ENCODE measurements at regions of chr15 and their contacts with region 1.

Region 1: GRCh38 chr15:74373731-74374647 is 6.5 kb upstream of the CYP11A1 start:
- DNase-seq: peak; percentile 96
- CTCF ChIP-seq: peak; percentile 96

Region 2: GRCh38 chr15:74389241-74390048 is 15.5 kb after region 1 on chr15:
- CTCF ChIA-PET with region 1: interaction called, 20 read pairs
- POLR2A ChIA-PET with region 1: no interaction called
- DNase-seq: no peak
- CTCF ChIP-seq: no peak

Region 3: DNA sequence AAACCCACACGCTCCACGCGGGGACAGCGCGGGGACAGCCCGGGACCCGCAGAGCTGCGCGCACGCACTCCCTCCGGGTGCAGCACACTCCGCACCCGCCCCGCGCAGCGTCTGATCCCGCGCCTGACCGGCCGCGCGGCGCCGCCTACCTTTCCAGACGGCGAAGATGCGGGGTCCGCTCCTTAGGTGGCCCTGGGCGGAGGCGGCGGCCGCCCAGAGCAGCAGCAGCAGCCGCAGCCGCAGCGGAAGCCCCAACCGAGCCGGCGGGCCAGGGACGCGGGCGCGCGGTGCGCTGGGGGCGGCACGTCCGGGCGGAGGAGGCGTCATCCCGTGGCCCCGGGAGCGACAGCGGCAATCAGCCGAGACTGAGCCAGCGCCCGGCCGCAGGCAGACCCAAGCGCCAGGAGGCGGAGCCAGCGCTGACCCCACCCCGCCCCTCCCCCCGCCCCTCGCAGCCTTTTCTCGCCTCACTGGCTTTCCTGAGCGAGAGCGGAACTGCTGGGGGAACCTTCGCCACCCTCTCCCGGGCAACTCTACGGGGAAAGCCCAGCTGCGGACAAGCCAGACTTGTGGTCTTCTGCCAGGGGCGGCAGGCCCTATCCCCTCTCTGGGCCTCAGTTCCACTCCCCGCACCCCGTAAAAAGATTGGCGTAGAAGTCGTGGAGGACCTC is 59.7 kb after region 1 on chr15 and contains the start of gene SEMA7A:
- CTCF ChIA-PET with region 1: interaction called, 827 read pairs
- POLR2A ChIA-PET with region 1: no interaction called
- DNase-seq: peak; percentile 97
- CTCF ChIP-seq: no peak

Region 4: GRCh38 chr15:74482661-74483060 is 108.7 kb after region 1 on chr15:
- CTCF ChIA-PET with region 1: interaction called, 77 read pairs
- POLR2A ChIA-PET with region 1: no interaction called
- DNase-seq: no peak
- CTCF ChIP-seq: peak; percentile 18

Region 5: DNA sequence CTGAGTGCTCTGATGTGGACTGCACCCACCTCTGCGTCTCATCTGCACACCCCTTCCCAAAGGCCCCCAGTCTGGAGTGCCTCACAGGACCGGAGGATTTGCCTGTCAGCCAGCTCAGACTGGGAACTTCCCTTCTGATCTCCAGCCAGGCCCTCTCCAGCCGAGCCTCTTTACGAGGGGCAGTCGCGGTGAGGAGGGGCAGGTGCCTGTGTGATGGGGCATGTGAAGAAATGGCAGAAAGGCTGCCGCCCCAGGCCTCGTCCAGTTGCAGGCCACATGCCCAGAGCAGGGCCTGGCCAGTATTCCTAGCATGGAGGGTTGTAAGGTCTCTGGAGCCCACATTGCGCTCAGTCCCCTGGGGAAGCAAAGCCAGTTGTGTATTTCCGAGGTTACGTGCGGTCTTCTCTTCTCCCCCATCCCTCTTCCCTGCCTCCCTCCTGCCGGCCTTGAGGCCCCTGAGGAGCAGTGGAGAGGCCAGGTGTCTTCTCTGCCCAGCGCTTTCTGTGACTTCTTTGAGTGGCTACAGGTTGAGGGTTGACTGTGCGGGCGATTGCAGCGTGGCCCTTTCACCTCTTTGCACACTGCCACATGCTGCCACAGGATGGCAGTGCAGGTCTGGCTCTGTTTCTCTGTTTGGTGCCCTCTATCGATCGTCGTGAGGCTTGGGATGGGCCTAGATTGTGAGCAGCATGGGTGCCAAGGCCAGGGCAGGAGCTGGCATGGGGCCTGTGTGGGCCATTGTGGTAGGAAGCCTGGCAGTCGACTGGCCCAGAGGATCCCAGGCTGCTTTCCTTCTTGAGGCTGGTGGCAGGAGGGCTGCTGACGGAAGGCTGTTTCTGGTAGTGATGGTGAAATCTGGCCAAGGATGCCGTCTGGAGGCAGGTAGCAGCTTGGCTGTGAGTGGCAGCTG is 246.9 kb after region 1 on chr15:
- CTCF ChIA-PET with region 1: interaction called, 10 read pairs
- POLR2A ChIA-PET with region 1: no interaction called
- DNase-seq: peak; percentile 85
- CTCF ChIP-seq: peak; percentile 93

Measured in GM10248 (cell line).